ENCODE measurements at regions of chr2 and their contacts with region 1.

Region 1: DNA sequence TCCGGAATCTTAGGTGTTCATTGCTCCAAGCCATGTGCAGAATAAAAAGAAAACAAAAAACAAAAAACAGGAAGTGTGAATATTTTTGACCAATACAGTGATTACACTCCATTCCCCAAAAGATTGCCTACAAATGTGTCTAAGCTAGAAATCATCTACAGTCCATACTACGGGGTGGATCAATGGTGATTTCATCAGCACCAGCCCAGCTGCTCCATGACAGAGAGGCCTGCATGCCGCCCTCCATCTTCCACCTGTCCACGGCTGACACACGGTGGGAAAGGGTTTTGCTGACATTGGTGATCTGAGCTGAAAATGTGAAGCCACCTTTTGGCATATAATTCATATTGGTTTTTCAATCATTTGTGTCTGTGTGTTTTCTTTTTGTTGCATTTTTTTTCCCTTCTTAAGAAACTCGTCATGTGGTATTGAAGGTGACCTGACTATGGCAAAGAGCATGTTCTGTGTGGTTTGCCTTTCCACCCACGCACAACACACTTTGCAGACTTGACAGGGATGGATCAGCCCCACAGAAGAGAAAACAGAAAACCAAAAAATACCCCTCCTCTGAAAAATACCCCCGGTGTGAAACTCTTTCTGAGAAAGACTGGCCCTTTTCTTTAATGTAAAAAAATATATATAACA is 533.1 kb downstream of the RNF144A start:
- DNase-seq: peak; percentile 67
- ATAC-seq: peak; percentile 58
- H3K4me3 Mint-ChIP-seq: peak overlapping the region; percentile 43
- H3K27ac Mint-ChIP-seq: peak overlapping the region; percentile 97
- H3K4me1 Mint-ChIP-seq: peaks cover 88% of the 10 kb centered on the region
- H3K27me3 Mint-ChIP-seq: no peaks in the 10 kb centered on the region

Region 2: DNA sequence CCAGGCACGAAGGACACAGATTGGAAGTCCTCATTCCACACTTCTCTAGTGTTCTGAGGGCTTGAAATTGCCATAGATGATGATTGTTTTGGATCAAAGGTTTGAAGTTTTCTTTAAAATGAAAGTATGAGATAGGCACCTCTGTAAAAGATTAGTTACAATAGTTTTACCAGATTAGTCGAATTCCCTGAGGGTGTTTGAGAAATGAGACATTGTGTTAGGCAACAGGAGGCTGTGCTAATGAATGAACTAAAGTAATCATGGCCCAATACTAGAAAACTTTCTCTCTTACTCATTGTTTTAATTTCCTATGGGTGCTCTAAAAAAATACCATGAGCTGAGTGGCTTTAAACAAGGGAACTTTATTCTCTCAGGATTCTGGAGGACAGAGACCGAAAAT is 111.3 kb before region 1 on chr2:
- CTCF ChIA-PET with region 1: no interaction called
- POLR2A ChIA-PET with region 1: no interaction called
- DNase-seq: no peak
- ATAC-seq: no peak
- H3K4me3 Mint-ChIP-seq: no peak overlapping the region
- H3K27ac Mint-ChIP-seq: no peak overlapping the region
- H3K4me1 Mint-ChIP-seq: no peaks in the 10 kb centered on the region
- H3K27me3 Mint-ChIP-seq: peaks cover 16% of the 10 kb centered on the region

Region 3: DNA sequence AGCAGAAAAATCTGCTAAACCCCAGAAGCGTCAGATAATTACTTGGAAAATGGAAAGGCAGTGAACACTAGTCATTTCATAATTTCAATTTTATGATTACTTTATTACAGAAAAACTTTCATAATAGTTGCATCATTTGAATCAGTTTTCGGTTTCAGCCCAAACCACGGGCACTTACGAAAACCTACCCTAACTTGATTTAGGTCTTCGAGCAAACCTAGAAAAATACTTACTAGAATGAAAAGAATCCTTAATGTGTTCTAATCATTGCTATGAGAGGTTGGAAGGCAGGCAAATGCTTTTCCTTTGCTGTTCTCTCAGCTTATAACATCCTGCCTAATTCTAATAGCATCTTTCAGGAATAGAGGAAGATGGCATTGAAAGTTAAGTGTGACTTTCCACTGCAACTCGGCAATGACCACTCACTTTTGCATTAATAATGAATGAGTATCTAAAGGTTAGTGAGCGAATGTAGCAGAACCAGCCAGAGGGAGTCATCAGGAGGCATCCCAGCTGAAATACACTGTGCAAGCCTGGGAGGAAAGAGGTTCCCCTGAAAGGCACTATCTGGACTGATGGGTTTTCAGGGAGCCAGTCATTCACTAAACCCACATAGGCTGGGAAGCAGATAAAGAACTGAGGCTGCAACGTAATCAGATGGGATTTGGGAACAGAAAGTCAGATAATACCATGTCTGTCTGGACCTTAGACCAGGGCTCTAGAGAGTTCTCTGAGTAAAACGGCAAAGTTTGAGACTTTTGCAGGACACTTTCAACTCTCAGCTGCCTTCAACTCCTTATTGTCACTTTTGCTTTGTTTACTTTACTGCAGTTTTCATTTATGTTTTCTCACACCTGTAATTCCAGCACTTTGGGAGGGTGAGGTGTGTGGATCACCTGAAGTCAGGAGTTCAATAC is 12.3 kb before region 1 on chr2:
- CTCF ChIA-PET with region 1: interaction called, 19 read pairs
- POLR2A ChIA-PET with region 1: interaction called, 75 read pairs
- DNase-seq: no peak
- ATAC-seq: peak; percentile 52
- H3K4me3 Mint-ChIP-seq: peak overlapping the region; percentile 51
- H3K27ac Mint-ChIP-seq: peak overlapping the region; percentile 86
- H3K4me1 Mint-ChIP-seq: peaks cover 71% of the 10 kb centered on the region
- H3K27me3 Mint-ChIP-seq: no peaks in the 10 kb centered on the region

Region 4: GRCh38 chr2:7467782-7468447 is 17.6 kb after region 1 on chr2:
- CTCF ChIA-PET with region 1: interaction called, 23 read pairs
- POLR2A ChIA-PET with region 1: interaction called, 31 read pairs
- DNase-seq: peak; percentile 71
- ATAC-seq: peak; percentile 97
- H3K4me3 Mint-ChIP-seq: no peak overlapping the region
- H3K27ac Mint-ChIP-seq: peak overlapping the region; percentile 87
- H3K4me1 Mint-ChIP-seq: peaks cover 48% of the 10 kb centered on the region
- H3K27me3 Mint-ChIP-seq: no peaks in the 10 kb centered on the region

Region 5: GRCh38 chr2:7473135-7473771 is 22.9 kb after region 1 on chr2:
- CTCF ChIA-PET with region 1: interaction called, 23 read pairs
- POLR2A ChIA-PET with region 1: interaction called, 31 read pairs
- DNase-seq: no peak
- ATAC-seq: no peak
- H3K4me3 Mint-ChIP-seq: no peak overlapping the region
- H3K27ac Mint-ChIP-seq: peak overlapping the region; percentile 27
- H3K4me1 Mint-ChIP-seq: peaks cover 58% of the 10 kb centered on the region
- H3K27me3 Mint-ChIP-seq: no peaks in the 10 kb centered on the region

Region 6: GRCh38 chr2:7567646-7568045 is 117.3 kb after region 1 on chr2:
- CTCF ChIA-PET with region 1: interaction called, 15 read pairs
- POLR2A ChIA-PET with region 1: interaction called, 24 read pairs
- DNase-seq: peak; percentile 80
- ATAC-seq: peak; percentile 94
- H3K4me3 Mint-ChIP-seq: peak overlapping the region; percentile 60
- H3K27ac Mint-ChIP-seq: peak overlapping the region; percentile 95
- H3K4me1 Mint-ChIP-seq: peaks cover 63% of the 10 kb centered on the region
- H3K27me3 Mint-ChIP-seq: no peaks in the 10 kb centered on the region

Region 7: DNA sequence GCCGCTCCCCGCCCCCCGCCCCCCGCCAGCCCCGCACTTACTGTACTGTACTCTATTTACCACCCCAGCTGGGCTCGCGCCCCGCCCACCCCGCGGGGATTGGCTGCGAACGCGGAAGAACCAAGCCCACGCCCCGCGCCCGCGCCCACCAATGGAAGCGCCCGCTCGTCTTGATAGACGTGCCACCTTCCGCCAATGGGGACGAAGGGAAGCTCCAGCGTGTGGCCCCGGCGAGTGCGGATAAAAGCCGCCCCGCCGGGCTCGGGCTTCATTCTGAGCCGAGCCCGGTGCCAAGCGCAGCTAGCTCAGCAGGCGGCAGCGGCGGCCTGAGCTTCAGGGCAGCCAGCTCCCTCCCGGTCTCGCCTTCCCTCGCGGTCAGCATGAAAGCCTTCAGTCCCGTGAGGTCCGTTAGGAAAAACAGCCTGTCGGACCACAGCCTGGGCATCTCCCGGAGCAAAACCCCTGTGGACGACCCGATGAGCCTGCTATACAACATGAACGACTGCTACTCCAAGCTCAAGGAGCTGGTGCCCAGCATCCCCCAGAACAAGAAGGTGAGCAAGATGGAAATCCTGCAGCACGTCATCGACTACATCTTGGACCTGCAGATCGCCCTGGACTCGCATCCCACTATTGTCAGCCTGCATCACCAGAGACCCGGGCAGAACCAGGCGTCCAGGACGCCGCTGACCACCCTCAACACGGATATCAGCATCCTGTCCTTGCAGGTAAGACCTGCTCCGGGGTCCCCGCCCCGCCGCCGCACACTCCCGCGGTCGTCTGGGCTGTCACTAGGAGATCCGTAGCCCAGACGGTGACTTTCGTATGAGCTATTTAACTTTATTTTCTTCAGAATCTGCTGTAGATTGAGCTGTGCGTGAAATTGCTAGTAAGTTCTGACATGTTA is 1231.7 kb after region 1 on chr2 and contains the start of gene ID2:
- CTCF ChIA-PET with region 1: no interaction called
- POLR2A ChIA-PET with region 1: interaction called, 18 read pairs
- DNase-seq: peak; percentile 99
- ATAC-seq: peak; percentile 68
- H3K4me3 Mint-ChIP-seq: peak within 1 kb of the TSS; percentile 99
- H3K27ac Mint-ChIP-seq: peak within 1 kb of the TSS; percentile 97
- H3K4me1 Mint-ChIP-seq: peaks cover 39% of the 10 kb centered on the region
- H3K27me3 Mint-ChIP-seq: peaks cover 11% of the 10 kb centered on the region
- total RNA-seq, gene ID2: 257 to 263 TPM